BJ (cell line): ENCODE measurements at regions of chr19 and their contacts with region 1.

Region 1: GRCh38 chr19:8321060-8321985 is at the starts of genes NDUFA7 and RPS28:
- DNase-seq: peak; percentile 59
- H3K4me3 ChIP-seq: peak within 1 kb of the TSS; percentile 62
- H3K27me3 ChIP-seq: no peaks in the 10 kb centered on the region
- CTCF ChIP-seq: peak; percentile 32; the same call in 1 of the 2 replicates
- polyA plus RNA-seq, gene NDUFA7: 40.5 and 48.3 TPM in 2 replicates
- polyA plus RNA-seq, gene RPS28: 371 and 525 TPM in 2 replicates

Region 2: GRCh38 chr19:8132858-8133458 is 188.4 kb before region 1 on chr19:
- CTCF ChIA-PET with region 1: no interaction called
- POLR2A ChIA-PET with region 1: no interaction called
- DNase-seq: no peak
- H3K4me3 ChIP-seq: no peak overlapping the region
- H3K27me3 ChIP-seq: no peaks in the 10 kb centered on the region
- CTCF ChIP-seq: no peak

Region 3: GRCh38 chr19:8240274-8241229 is 80.8 kb before region 1 on chr19:
- CTCF ChIA-PET with region 1: no interaction called
- POLR2A ChIA-PET with region 1: no interaction called
- DNase-seq: peak; percentile 47
- H3K4me3 ChIP-seq: no peak overlapping the region
- H3K27me3 ChIP-seq: no peaks in the 10 kb centered on the region
- CTCF ChIP-seq: no peak

Region 4: GRCh38 chr19:8261347-8262310 is 59.7 kb before region 1 on chr19:
- CTCF ChIA-PET with region 1: no interaction called
- POLR2A ChIA-PET with region 1: no interaction called
- DNase-seq: no peak
- H3K4me3 ChIP-seq: no peak overlapping the region
- H3K27me3 ChIP-seq: no peaks in the 10 kb centered on the region; the same call in 1 of the 2 replicates
- CTCF ChIP-seq: no peak

Region 5: GRCh38 chr19:8441725-8442544 is 120.6 kb after region 1 on chr19:
- CTCF ChIA-PET with region 1: no interaction called
- POLR2A ChIA-PET with region 1: interaction called, 18 read pairs
- DNase-seq: no peak
- H3K4me3 ChIP-seq: no peak overlapping the region
- H3K27me3 ChIP-seq: no peaks in the 10 kb centered on the region
- CTCF ChIP-seq: no peak